ENCODE measurements at regions of chr2 and their contacts with region 1.

Region 1: DNA sequence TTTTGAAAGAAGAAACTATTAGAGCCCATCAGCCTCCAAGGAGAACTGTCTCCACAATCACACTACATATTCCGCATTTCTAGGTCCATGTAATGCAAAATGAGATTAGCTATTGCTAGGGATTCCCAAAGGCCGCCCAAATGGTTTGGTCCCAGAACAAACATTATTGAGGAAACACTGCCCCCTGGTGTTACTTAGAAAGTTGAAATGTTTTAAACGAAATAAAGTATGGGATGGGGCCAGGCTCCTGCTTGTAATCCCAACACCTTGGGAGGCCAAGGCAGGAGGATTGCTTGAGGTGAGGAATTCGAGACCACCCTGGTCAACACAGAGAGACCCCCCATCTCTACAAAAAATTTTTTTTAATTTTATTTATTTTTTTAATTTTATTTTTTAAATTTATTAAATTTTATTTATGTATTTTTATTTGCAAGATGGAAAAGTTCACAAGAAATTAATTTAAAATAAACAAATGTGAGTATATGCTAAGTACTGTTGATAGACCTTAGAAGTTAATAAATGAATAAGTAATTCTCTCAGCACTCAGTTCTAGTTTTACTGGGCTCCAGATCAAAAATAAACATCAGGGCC is 5.5 kb downstream of the NHEJ1 start:
- DNase-seq: peak in 5 of 7 donors; percentile 35 to 71 (median 56)
- H3K4me3 ChIP-seq: no peak overlapping the region
- H3K27ac ChIP-seq: no peak overlapping the region
- H3K4me1 ChIP-seq: peaks cover 5% of the 10 kb centered on the region in 2 donors
- H3K27me3 ChIP-seq: no peaks in the 10 kb centered on the region
- CTCF ChIP-seq: peak; percentile 36 to 85 (median 75)
- POLR2A ChIP-seq: no peak

Region 2: GRCh38 chr2:218995972-218996711 is 159.0 kb before region 1 on chr2:
- intact Hi-C with region 1: loop called in 1 of 2 experiments (anchors 10 kb)
- DNase-seq: peak; percentile 91 to 97 (median 94)
- H3K4me3 ChIP-seq: peak overlapping the region in 1 of 4 donors; percentile 40
- H3K27ac ChIP-seq: peak overlapping the region in 1 of 5 donors; percentile 73
- H3K4me1 ChIP-seq: peaks cover 12 to 15% of the 10 kb centered on the region in 2 donors
- H3K27me3 ChIP-seq: peaks cover 39% of the 10 kb centered on the region
- CTCF ChIP-seq: peak; percentile 83 to 92 (median 90)
- POLR2A ChIP-seq: peak; percentile 57 to 80

Region 3: DNA sequence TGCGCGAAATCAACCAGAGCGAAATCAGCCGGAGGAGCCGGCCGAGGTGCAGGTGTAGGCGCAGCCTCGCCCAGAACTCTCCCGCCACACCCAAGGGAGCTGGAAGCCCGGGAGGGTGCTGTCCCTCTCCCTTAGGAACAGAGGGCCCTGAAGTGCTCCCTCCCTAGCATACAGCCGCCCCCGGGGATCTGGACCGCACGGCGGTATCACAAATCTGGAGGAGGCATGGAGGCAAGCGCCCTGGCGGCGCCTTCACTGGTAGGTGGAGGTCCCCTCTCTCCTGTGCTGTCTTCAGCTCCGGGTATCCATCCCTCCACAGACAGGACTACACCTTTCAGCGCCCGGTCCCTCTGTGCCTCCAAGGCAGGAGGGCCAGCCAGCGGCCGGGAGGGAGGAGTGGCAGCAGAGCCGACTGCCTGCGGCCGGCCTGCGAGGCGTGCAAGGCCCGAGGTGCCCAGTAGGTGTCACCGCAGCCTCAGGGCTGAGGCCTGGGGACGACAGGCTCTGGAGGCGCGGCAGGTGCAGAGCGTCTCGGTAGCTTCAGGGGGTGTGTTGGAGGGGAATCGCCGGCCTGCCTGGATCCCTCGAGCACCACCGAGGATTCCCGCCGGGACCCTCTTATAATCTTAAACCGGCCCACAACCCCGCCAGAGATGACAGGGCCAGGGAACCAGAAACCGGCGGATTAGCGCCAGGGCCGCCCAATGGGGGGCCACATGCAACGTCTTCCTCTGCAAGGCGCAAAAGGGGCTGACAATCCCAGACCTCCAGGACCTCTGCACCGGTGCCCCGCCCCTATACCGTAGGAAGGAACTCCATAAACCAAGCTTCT is 97.2 kb before region 1 on chr2:
- intact Hi-C with region 1: loop called (anchors 2 to 5 kb)
- DNase-seq: peak; percentile 68 to 85 (median 81)
- H3K4me3 ChIP-seq: peak overlapping the region in 1 of 4 donors; percentile 12
- H3K27ac ChIP-seq: no peak overlapping the region
- H3K4me1 ChIP-seq: peaks cover 20 to 36% of the 10 kb centered on the region in 2 donors
- H3K27me3 ChIP-seq: peaks cover 62% of the 10 kb centered on the region
- CTCF ChIP-seq: peak; percentile 85 to 97 (median 90)
- POLR2A ChIP-seq: no peak

Region 4: DNA sequence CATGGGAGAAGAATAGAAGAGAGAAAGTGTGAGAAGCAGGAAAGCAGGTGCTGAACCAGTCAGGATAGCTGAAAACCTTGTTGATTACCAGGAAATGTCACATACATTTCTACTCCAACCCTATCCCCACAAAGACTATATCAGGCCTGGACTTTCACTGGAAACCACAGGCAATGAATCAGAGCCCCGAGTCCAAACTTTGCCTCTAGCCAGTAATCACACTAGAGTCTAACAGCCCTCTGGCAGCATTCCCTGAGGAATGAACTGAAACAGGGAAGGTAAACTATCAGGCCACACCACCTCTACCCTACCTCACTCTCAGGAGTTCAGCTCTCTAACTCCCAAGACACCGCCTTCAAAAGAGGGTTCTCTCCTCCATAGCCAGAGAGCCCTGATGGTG is 75.7 kb before region 1 on chr2:
- intact Hi-C with region 1: loop called in 1 of 2 experiments (anchors 5 kb)
- DNase-seq: no peak
- H3K4me3 ChIP-seq: no peak overlapping the region
- H3K27ac ChIP-seq: no peak overlapping the region
- H3K4me1 ChIP-seq: no peaks in the 10 kb centered on the region
- H3K27me3 ChIP-seq: no peaks in the 10 kb centered on the region
- CTCF ChIP-seq: no peak
- POLR2A ChIP-seq: no peak

Region 5: DNA sequence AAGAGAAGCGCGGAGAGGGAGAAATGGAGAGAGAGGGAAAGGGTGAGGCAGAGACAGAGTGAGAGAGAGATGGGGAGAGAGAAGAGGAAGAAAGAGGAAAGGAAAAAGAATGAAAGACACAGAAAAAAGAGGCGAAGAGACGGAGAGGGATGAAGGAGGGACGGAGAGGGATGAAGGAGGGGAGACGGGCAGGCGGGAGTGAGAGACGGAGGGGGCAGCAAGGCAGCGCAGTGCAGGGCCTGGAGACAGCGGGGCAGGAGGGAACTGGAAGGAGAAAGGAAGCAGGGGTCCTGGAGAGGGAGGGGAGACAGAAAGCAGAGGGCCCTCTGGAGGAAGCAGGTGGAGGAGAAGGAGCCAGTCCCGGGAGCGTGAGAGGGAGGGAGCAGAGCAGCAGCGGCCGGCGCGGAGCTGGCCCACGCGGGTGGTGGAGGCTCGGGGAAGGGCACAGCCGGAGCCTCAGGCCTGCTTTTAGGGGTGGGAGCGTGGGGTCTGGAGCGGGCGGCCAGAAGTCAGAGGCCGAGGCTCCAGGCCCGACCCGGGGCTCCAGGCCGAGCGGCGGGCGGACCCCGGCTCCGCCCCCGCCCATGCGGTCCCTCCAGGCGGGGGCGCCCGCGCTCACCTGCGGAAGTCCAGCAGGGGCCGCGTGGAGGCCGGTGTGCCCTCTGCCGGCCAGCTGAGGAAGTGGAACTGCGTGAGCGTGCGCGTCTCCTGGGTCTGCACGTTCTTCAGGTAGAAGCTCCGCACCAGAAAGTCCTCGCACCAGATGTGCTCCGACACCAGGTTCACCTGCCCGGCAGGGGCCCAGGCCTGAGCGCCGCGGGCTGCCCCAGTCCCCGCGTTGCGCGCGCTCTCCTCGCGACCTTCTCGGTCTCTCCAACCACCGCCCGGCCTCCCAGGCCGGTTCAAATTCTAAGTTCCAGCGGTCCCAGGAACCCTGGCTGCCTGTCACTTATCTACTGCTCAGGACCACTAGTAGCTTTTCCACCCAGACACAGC is 139.5 kb after region 1 on chr2:
- intact Hi-C with region 1: loop called (anchors 2 to 5 kb)
- DNase-seq: peak; percentile 80 to 93 (median 87)
- H3K4me3 ChIP-seq: peak overlapping the region in 2 of 4 donors; percentile 16 to 62
- H3K27ac ChIP-seq: peak overlapping the region in 2 of 5 donors; percentile 75 to 79
- H3K4me1 ChIP-seq: peaks cover 0 to 7% of the 10 kb centered on the region in 2 donors
- H3K27me3 ChIP-seq: no peaks in the 10 kb centered on the region
- CTCF ChIP-seq: peak; percentile 71 to 100 (median 92)
- POLR2A ChIP-seq: peak; percentile 25 to 43

Measured in adrenal gland (tissue), 19 donors.